Motor neuron (in vitro differentiated cells): ENCODE measurements at regions of chr15 and their contacts with region 1.

Region 1: GRCh38 chr15:91224755-91225380 is 124.8 kb downstream of the SV2B start:
- ATAC-seq: peak in 4 of 8 experiments; percentile 52 to 78 (median 68)
- H3K4me3 ChIP-seq: no peak overlapping the region
- H3K27ac ChIP-seq: no peak overlapping the region
- H3K4me1 ChIP-seq: peaks cover 0 to 11% of the 10 kb centered on the region in 2 donors

Region 2: DNA sequence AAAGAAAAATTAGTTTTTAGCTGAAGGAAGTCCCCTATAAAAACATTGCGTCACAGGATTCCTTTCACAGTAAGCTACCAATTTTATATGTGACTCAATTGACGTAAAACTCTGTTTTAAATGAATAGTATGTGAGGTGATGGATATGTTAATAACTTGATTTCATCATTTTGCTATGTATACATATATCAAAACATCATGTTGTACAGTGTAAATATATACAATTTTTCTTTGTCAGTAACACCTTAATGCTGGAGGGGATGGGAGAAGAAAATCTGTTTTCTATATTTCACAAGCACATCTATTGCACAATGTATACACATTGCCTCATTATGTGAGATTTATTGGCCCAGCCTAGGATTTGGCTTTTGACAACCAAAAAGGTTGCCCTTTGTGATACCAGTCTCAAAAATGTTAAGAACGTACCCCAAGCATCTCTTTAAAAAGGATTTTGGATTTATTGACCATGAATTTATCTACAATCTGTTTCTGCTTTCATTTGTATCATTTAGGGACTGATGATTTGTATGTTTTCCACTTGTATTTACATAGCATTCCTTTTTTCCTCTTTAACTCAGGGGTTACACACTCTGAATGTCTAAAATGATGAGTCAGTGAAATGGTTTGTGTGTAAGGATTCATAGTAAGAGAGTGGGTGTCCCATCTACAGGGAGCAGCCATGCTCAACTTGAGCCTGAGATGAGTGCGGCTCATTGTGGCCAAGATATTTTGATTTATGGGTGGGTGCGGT is 632.6 kb before region 1 on chr15:
- in situ Hi-C with region 1: no loop called
- ATAC-seq: peak in 3 of 8 experiments; percentile 49 to 85 (median 68)
- H3K4me3 ChIP-seq: no peak overlapping the region
- H3K27ac ChIP-seq: no peak overlapping the region
- H3K4me1 ChIP-seq: no peaks in the 10 kb centered on the region

Region 3: GRCh38 chr15:90954712-90955671 is 269.9 kb before region 1 on chr15 and contains the start of gene RCCD1:
- in situ Hi-C with region 1: loop called in 1 of 9 experiments (anchors 25 kb)
- ATAC-seq: peak; percentile 86 to 93 (median 90)
- H3K4me3 ChIP-seq: peak within 1 kb of the TSS; percentile 55 to 92 (median 61)
- H3K27ac ChIP-seq: peak within 1 kb of the TSS; percentile 55 to 73
- H3K4me1 ChIP-seq: peaks cover 7 to 12% of the 10 kb centered on the region in 2 donors
- total RNA-seq, gene RCCD1: 5.7 to 16.8 (median 6.7) TPM

Region 4: GRCh38 chr15:91055548-91056331 is 169.1 kb before region 1 on chr15:
- in situ Hi-C with region 1: loop called in 6 of 9 experiments (anchors 5 to 25 kb)
- ATAC-seq: peak; percentile 75 to 98 (median 91)
- H3K4me3 ChIP-seq: no peak overlapping the region
- H3K27ac ChIP-seq: no peak overlapping the region
- H3K4me1 ChIP-seq: no peaks in the 10 kb centered on the region

Region 5: GRCh38 chr15:91782221-91782620 is 557.4 kb after region 1 on chr15:
- in situ Hi-C with region 1: no loop called
- ATAC-seq: no peak
- H3K4me3 ChIP-seq: no peak overlapping the region
- H3K27ac ChIP-seq: no peak overlapping the region
- H3K4me1 ChIP-seq: peaks cover 0 to 9% of the 10 kb centered on the region in 2 donors